PC-3 (cell line): ENCODE measurements at regions of chr5 and their contacts with region 1.

Region 1: GRCh38 chr5:88729084-88729828 is 153.7 kb downstream of the MEF2C start:
- DNase-seq: peak; percentile 88
- ATAC-seq: peak; percentile 67
- H3K4me3 ChIP-seq: no peak overlapping the region
- H3K27ac ChIP-seq: no peak overlapping the region
- H3K4me1 ChIP-seq: 0 out of 2 replicates have a peak, but pooled peaks cover 3% of the 10 kb centered on the region
- H3K27me3 ChIP-seq: no peaks in the 10 kb centered on the region
- CTCF ChIP-seq: peak; percentile 84

Region 2: DNA sequence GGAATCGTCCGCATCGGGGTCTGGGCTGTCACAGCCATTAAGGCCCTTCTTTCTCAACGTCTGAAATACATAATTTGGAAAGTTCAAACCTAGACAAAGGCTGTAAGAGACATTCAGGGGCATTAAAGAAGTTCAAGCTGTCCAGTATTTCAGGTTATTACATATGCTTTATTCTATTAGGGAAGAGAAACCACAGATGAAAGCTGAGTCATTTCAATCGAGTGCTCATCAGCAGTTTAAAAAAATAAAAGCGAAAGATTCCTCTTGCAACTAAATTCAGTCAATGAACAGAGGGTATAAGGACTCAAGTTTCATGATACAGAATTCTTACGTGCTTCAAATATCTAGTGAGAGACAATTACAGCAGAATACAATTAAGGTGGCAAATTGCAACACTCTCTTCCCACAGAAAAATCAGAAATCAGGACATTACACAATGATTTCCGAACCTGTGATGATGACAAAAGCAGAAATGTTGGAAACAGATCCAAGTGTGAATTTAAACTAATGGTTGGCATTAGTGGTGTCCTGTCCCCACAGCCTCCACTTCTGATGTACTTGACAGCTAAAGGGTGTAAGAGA is 32.1 kb after region 1 on chr5:
- CTCF ChIA-PET with region 1: no interaction called
- POLR2A ChIA-PET with region 1: no interaction called
- intact Hi-C with region 1: no loop called
- DNase-seq: peak; percentile 45
- ATAC-seq: peak; percentile 51
- H3K4me3 ChIP-seq: no peak overlapping the region
- H3K27ac ChIP-seq: no peak overlapping the region
- H3K4me1 ChIP-seq: peaks cover 16% of the 10 kb centered on the region
- H3K27me3 ChIP-seq: no peaks in the 10 kb centered on the region
- CTCF ChIP-seq: no peak

Region 3: GRCh38 chr5:88826646-88827585 is 97.7 kb after region 1 on chr5:
- CTCF ChIA-PET with region 1: no interaction called
- POLR2A ChIA-PET with region 1: no interaction called
- intact Hi-C with region 1: loop called (anchors 5 kb)
- DNase-seq: peak; percentile 70
- ATAC-seq: peak; percentile 72
- H3K4me3 ChIP-seq: no peak overlapping the region
- H3K27ac ChIP-seq: peak overlapping the region; percentile 76
- H3K4me1 ChIP-seq: peaks cover 30% of the 10 kb centered on the region
- H3K27me3 ChIP-seq: no peaks in the 10 kb centered on the region
- CTCF ChIP-seq: no peak

Region 4: GRCh38 chr5:88883059-88883835 is 154.0 kb after region 1 on chr5 and contains the start of gene MEF2C:
- CTCF ChIA-PET with region 1: interaction called, 3 read pairs
- POLR2A ChIA-PET with region 1: interaction called, 14 read pairs
- intact Hi-C with region 1: loop called (anchors 1 kb)
- DNase-seq: peak; percentile 83
- ATAC-seq: peak; percentile 64
- H3K4me3 ChIP-seq: peak within 1 kb of the TSS; percentile 85
- H3K27ac ChIP-seq: peak within 1 kb of the TSS; percentile 56
- H3K4me1 ChIP-seq: peaks cover 38% of the 10 kb centered on the region
- H3K27me3 ChIP-seq: no peaks in the 10 kb centered on the region
- CTCF ChIP-seq: no peak
- total RNA-seq, gene MEF2C: 4.4 and 8.0 TPM in 2 replicates

Region 5: GRCh38 chr5:89043676-89044075 is 314.4 kb after region 1 on chr5:
- CTCF ChIA-PET with region 1: no interaction called
- POLR2A ChIA-PET with region 1: no interaction called
- intact Hi-C with region 1: no loop called
- DNase-seq: peak; percentile 89
- ATAC-seq: peak; percentile 97
- H3K4me3 ChIP-seq: no peak overlapping the region
- H3K27ac ChIP-seq: peak overlapping the region; percentile 33; the same call in 1 of the 2 replicates
- H3K4me1 ChIP-seq: peaks cover 23% of the 10 kb centered on the region
- H3K27me3 ChIP-seq: no peaks in the 10 kb centered on the region
- CTCF ChIP-seq: no peak

Region 6: GRCh38 chr5:89241186-89241585 is 511.9 kb after region 1 on chr5:
- CTCF ChIA-PET with region 1: no interaction called
- POLR2A ChIA-PET with region 1: interaction called, 3 read pairs
- intact Hi-C with region 1: loop called (anchors 1 kb)
- DNase-seq: peak; percentile 73
- ATAC-seq: peak; percentile 65
- H3K4me3 ChIP-seq: no peak overlapping the region
- H3K27ac ChIP-seq: peak overlapping the region; percentile 28
- H3K4me1 ChIP-seq: peaks cover 35% of the 10 kb centered on the region
- H3K27me3 ChIP-seq: no peaks in the 10 kb centered on the region
- CTCF ChIP-seq: no peak

Region 7: DNA sequence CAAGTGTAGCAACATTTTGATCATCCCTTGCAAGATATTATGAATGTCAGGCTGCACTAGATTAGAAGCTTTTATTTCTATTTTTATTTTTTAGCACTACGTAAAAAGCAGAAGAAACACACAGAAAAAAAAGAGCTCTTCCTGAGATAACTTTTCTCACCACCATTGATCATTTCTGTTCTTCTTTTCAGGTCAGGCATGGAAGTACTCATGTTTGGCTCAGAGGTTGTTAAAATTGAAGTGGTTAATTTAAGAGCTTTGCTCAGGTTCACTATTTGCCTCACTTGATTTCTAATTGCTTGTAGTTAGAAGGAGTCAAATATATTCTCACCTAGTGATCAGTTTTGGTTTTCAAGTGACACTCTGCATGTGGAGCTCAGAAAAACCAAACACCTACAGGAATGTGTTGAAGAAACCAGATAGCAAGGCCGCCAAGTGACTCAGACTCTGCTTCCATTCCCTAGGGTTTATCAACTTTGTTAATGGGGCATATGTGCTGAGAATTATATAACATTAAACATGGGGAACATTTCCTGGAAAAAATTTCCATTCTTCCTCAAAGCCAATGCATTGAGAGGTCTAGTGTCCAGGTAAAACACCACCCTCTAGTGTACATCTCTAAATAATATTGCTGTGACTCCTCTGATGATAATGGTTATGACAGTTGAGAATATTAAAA is 1000.5 kb after region 1 on chr5:
- CTCF ChIA-PET with region 1: interaction called, 5 read pairs
- POLR2A ChIA-PET with region 1: no interaction called
- intact Hi-C with region 1: loop called (anchors 1 kb)
- DNase-seq: peak; percentile 73
- ATAC-seq: peak; percentile 88
- H3K4me3 ChIP-seq: no peak overlapping the region
- H3K27ac ChIP-seq: no peak overlapping the region
- H3K4me1 ChIP-seq: 0 out of 2 replicates have a peak, but pooled peaks cover 4% of the 10 kb centered on the region
- H3K27me3 ChIP-seq: no peaks in the 10 kb centered on the region
- CTCF ChIP-seq: peak; percentile 80

Region 8: DNA sequence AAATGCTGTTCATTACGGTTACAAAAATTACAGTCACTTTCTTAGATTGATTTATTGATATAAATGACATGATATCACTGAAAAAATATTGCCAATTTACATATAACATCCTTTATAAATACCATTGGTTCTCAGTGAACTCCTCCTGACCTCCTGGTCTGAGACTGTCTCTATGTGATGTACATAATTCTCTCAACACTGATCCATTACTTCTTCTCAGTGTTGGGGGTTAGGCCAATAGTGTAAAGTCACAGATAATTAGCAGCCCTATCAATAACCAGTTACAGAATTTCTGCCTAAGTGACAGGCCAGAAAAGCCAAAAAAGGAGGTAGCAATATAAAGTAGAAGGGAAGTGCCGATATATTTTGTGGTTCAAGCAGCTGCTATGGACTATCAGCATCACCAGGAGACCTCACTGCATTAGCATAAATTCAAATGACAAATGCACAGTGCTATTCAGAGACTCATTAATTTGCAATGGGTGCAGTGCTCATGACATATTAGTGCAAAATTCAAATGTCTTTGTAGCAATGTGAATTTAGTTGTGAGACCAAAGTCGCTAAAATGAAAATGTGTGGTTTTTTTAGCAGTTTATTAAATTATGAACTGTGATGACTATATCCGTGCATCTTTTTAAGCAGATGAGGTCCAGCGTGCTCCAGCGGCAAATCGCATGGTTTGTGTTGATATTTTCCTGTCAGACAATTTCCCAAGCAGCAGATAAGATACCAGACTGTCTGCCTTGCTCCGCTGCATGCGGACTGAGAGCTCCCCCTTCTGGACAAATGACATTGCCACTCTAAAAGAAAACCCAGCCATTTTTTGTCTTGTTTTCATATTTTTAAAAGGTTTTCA is 1535.7 kb after region 1 on chr5:
- CTCF ChIA-PET with region 1: interaction called, 4 read pairs
- POLR2A ChIA-PET with region 1: no interaction called
- intact Hi-C with region 1: loop called (anchors 2 kb)
- DNase-seq: peak; percentile 82
- ATAC-seq: peak; percentile 84
- H3K4me3 ChIP-seq: no peak overlapping the region
- H3K27ac ChIP-seq: no peak overlapping the region
- H3K4me1 ChIP-seq: no peaks in the 10 kb centered on the region
- H3K27me3 ChIP-seq: no peaks in the 10 kb centered on the region
- CTCF ChIP-seq: peak; percentile 99

Region 9: DNA sequence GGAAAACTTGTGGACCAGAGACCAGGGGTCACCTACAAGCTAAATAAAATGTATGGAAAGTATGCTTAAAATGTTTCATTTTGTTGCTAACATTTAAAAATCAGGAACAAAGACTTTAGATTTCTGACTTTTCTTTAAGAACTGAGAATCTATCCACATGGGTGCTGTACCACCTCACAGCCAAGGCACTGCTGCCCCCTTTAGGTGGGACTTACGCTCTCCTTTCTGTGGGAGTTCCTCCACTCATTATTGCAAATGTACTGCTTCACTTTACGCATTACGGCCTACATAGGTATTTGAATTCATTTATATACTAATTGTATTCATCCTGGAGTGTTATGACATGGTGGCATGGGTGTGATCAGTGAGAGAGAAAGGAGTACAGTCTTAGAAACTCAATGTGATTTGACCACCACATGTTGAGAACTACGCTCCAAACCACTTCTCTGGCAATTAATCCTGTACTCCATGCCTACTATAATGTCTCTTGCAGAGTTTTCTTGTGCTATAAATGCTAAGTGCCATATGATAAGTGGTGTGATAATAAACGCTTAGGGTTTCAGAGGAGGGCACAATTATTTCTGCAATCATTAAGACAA is 1705.0 kb after region 1 on chr5:
- CTCF ChIA-PET with region 1: no interaction called
- POLR2A ChIA-PET with region 1: no interaction called
- intact Hi-C with region 1: loop called (anchors 10 kb)
- DNase-seq: peak; percentile 76
- ATAC-seq: peak; percentile 97
- H3K4me3 ChIP-seq: no peak overlapping the region
- H3K27ac ChIP-seq: no peak overlapping the region
- H3K4me1 ChIP-seq: no peaks in the 10 kb centered on the region
- H3K27me3 ChIP-seq: no peaks in the 10 kb centered on the region
- CTCF ChIP-seq: peak; percentile 96